Heart left ventricle (tissue), 16 donors: ENCODE measurements at regions of chr9 and their contacts with region 1.

Region 1: GRCh38 chr9:71048280-71048679 is 73.1 kb downstream of the TRPM3 start:
- DNase-seq: no peak
- ATAC-seq: no peak
- H3K4me3 ChIP-seq: no peak overlapping the region
- H3K27ac ChIP-seq: no peak overlapping the region
- H3K4me1 ChIP-seq: no peaks in the 10 kb centered on the region
- H3K27me3 ChIP-seq: peaks cover 0 to 3% (median 0%) of the 10 kb centered on the region in 9 donors
- CTCF ChIP-seq: no peak
- POLR2A ChIP-seq: no peak

Region 2: DNA sequence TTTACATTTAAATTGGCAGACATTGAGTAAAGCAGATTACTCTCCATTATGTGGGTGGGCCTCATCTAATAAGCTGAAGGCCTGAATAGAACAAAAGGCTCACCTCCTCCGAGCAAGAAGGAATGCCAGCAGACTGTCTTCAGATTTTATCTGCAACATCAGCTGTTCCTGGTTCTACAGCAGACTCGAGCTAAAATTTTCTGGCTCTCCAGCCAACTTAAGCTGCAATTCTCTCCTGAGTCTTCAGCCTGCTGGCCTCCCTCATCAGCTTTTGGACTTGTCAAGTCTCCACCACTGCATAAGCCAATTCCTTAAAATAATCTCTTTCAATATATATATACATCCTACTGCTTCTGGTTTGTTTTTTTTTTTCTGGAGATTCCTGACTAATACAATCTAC is 60.7 kb after region 1 on chr9:
- intact Hi-C with region 1: loop called in 1 of 10 experiments (anchors 10 kb)
- DNase-seq: no peak
- ATAC-seq: no peak
- H3K4me3 ChIP-seq: no peak overlapping the region
- H3K27ac ChIP-seq: no peak overlapping the region
- H3K4me1 ChIP-seq: no peaks in the 10 kb centered on the region
- H3K27me3 ChIP-seq: no peaks in the 10 kb centered on the region
- CTCF ChIP-seq: no peak
- POLR2A ChIP-seq: no peak